Calu3 (cell line): ENCODE measurements at regions of chr2 and their contacts with region 1.

Region 1: GRCh38 chr2:190088917-190089316 is 26.4 kb upstream of the MSTN start:
- DNase-seq: peak; percentile 59
- H3K4me3 Mint-ChIP-seq: no peak overlapping the region
- H3K27ac Mint-ChIP-seq: no peak overlapping the region
- H3K4me1 Mint-ChIP-seq: peaks cover 9% of the 10 kb centered on the region
- H3K27me3 Mint-ChIP-seq: no peaks in the 10 kb centered on the region
- CTCF ChIP-seq: peak; percentile 82

Region 2: GRCh38 chr2:189783927-189784867 is 304.7 kb before region 1 on chr2 and contains the starts of genes ORMDL1 and PMS1:
- CTCF ChIA-PET with region 1: no interaction called
- intact Hi-C with region 1: no loop called
- DNase-seq: peak; percentile 96
- H3K4me3 Mint-ChIP-seq: peak within 1 kb of the TSS; percentile 74
- H3K27ac Mint-ChIP-seq: peak within 1 kb of the TSS; percentile 82
- H3K4me1 Mint-ChIP-seq: peaks cover 17% of the 10 kb centered on the region
- H3K27me3 Mint-ChIP-seq: no peaks in the 10 kb centered on the region
- CTCF ChIP-seq: no peak
- total RNA-seq, gene ORMDL1: 58.4 TPM in 2 replicates
- total RNA-seq, gene PMS1: 30.1 and 43.8 TPM in 2 replicates

Region 3: DNA sequence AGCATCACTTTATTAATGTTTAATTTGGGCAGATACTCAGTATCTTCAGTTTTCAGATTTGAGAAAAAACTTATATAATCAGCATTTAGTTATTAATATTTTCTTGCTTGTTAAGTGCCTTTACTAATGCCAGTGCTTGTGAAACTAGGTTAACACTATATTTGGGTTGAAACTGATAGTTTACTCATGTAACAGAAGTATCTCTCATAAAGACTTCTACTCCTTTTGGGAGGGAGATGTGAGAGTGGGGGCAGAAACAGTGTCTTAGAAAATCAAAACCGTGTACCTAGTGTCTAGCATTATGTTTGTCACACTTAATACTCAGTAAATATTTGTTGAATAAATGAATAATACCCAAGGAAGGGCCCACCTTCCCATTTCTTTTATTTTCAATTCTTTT is 155.9 kb before region 1 on chr2:
- CTCF ChIA-PET with region 1: no interaction called
- intact Hi-C with region 1: no loop called
- DNase-seq: no peak
- H3K4me3 Mint-ChIP-seq: no peak overlapping the region
- H3K27ac Mint-ChIP-seq: no peak overlapping the region
- H3K4me1 Mint-ChIP-seq: peaks cover 8% of the 10 kb centered on the region
- H3K27me3 Mint-ChIP-seq: no peaks in the 10 kb centered on the region
- CTCF ChIP-seq: no peak

Region 4: GRCh38 chr2:190162851-190163250 is 73.9 kb after region 1 on chr2:
- CTCF ChIA-PET with region 1: no interaction called
- intact Hi-C with region 1: loop called (anchors 5 kb)
- DNase-seq: no peak
- H3K4me3 Mint-ChIP-seq: no peak overlapping the region
- H3K27ac Mint-ChIP-seq: no peak overlapping the region
- H3K4me1 Mint-ChIP-seq: no peaks in the 10 kb centered on the region
- H3K27me3 Mint-ChIP-seq: no peaks in the 10 kb centered on the region
- CTCF ChIP-seq: no peak

Region 5: GRCh38 chr2:190277234-190278112 is 188.6 kb after region 1 on chr2:
- CTCF ChIA-PET with region 1: no interaction called
- intact Hi-C with region 1: loop called (anchors 2 kb)
- DNase-seq: no peak
- H3K4me3 Mint-ChIP-seq: no peak overlapping the region
- H3K27ac Mint-ChIP-seq: no peak overlapping the region
- H3K4me1 Mint-ChIP-seq: peaks cover 26% of the 10 kb centered on the region
- H3K27me3 Mint-ChIP-seq: no peaks in the 10 kb centered on the region
- CTCF ChIP-seq: peak; percentile 31

Region 6: GRCh38 chr2:190328573-190329147 is 239.7 kb after region 1 on chr2:
- CTCF ChIA-PET with region 1: no interaction called
- intact Hi-C with region 1: no loop called
- DNase-seq: no peak
- H3K4me3 Mint-ChIP-seq: no peak overlapping the region
- H3K27ac Mint-ChIP-seq: no peak overlapping the region
- H3K4me1 Mint-ChIP-seq: peaks cover 5% of the 10 kb centered on the region
- H3K27me3 Mint-ChIP-seq: no peaks in the 10 kb centered on the region
- CTCF ChIP-seq: no peak

Region 7: GRCh38 chr2:190376591-190377245 is 287.8 kb after region 1 on chr2:
- CTCF ChIA-PET with region 1: no interaction called
- intact Hi-C with region 1: loop called (anchors 1 kb)
- DNase-seq: no peak
- H3K4me3 Mint-ChIP-seq: no peak overlapping the region
- H3K27ac Mint-ChIP-seq: no peak overlapping the region
- H3K4me1 Mint-ChIP-seq: no peaks in the 10 kb centered on the region
- H3K27me3 Mint-ChIP-seq: no peaks in the 10 kb centered on the region
- CTCF ChIP-seq: no peak

Region 8: GRCh38 chr2:190804182-190804795 is 715.4 kb after region 1 on chr2:
- CTCF ChIA-PET with region 1: no interaction called
- intact Hi-C with region 1: loop called (anchors 5 kb)
- DNase-seq: peak; percentile 32
- H3K4me3 Mint-ChIP-seq: no peak overlapping the region
- H3K27ac Mint-ChIP-seq: no peak overlapping the region
- H3K4me1 Mint-ChIP-seq: peaks cover 45% of the 10 kb centered on the region
- H3K27me3 Mint-ChIP-seq: no peaks in the 10 kb centered on the region
- CTCF ChIP-seq: peak; percentile 55